Heart right ventricle (tissue), 16 donors: ENCODE measurements at regions of chr22 and their contacts with region 1.

Region 1: DNA sequence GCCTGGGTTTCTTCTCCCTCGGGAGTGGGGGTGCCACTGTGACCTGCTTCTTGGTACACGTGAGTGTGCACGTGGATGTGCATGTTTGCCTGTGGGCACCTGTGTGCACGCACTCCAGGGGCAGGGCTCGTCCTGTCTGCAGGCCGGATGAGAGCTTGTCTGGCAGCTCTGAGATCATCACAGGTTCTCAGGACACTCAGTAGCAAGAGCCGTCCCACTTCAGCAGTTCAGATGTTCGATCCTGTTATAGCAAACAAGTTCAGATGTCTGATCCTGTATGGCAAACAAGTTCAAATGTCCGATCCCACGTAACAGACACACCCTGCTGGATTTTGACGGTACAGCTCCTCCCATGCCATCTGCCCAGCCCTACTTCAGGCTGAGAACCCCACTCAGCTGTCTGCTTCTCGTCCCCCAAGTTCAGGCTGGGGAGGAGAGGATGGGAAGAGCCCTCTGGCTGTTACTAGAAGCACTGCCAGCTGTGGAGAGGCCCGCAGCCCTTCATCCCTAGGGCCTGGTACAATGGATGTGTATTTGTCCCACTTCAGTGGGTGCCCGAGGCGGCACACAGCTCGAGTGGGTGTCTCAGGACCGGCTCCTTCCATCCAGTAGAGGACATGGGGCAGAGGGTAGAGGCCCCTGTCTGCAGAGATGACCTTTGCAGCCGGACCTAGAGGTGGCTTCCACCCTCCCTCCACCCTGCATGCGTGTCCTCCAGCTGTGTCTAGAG is 1126.9 kb downstream of the BRD1 start:
- DNase-seq: no peak
- ATAC-seq: no peak
- H3K4me3 ChIP-seq: no peak overlapping the region
- H3K27ac ChIP-seq: no peak overlapping the region
- H3K4me1 ChIP-seq: no peaks in the 10 kb centered on the region
- H3K27me3 ChIP-seq: peaks cover 0 to 14% (median 8%) of the 10 kb centered on the region in 7 donors
- CTCF ChIP-seq: no peak

Region 2: GRCh38 chr22:48669986-48670716 is 30.6 kb before region 1 on chr22:
- intact Hi-C with region 1: loop called in 1 of 10 experiments (anchors 1 kb)
- DNase-seq: no peak
- ATAC-seq: no peak
- H3K4me3 ChIP-seq: no peak overlapping the region
- H3K27ac ChIP-seq: no peak overlapping the region
- H3K4me1 ChIP-seq: no peaks in the 10 kb centered on the region
- H3K27me3 ChIP-seq: peaks cover 0 to 18% (median 0%) of the 10 kb centered on the region in 7 donors
- CTCF ChIP-seq: no peak